AG04450 (cell line): ENCODE measurements at regions of chr14 and their contacts with region 1.

Region 1: GRCh38 chr14:72904840-72905561 is 11.1 kb upstream of the DPF3 start:
- DNase-seq: peak; percentile 49
- H3K4me3 ChIP-seq: no peak overlapping the region
- H3K27ac ChIP-seq: no peak overlapping the region
- H3K27me3 ChIP-seq: no peaks in the 10 kb centered on the region
- CTCF ChIP-seq: peak; percentile 96

Region 2: DNA sequence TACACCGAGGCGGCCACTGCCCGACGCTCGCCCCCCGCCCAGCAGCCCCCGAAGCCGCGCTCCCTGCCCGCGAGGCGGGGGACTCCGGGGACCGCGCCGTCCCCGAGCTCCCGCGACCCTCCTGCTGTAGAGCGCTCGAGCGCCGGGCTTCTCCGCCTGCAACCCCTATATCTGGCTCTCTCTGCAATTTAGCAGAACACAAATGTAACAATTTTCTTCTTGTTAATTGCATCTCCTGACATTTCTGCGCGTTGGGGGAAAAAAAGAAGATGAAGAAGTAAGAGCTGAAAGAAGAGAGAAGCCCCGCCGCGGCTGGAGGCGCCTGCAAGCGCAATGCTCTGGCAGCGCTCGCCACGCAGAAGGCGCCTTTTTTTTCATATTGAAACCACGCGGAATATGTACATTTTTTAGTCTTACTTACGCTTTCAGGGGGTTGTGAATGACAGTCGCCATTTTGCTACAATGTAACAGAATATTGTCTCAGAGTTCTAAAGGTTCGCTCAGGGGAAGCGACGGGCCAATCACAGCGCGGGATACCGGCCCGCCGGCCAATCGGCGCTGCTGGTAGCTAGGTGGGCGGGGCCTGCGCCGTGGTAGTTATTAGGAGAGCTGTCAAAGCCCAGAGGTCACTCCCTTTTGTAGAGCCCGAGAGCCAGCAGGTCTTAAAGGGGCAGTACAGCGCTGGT is 11.2 kb before region 1 on chr14 and contains the start of gene DPF3:
- CTCF ChIA-PET with region 1: interaction called, 15 read pairs
- POLR2A ChIA-PET with region 1: interaction called, 3 read pairs
- DNase-seq: peak; percentile 91
- H3K4me3 ChIP-seq: peak within 1 kb of the TSS; percentile 83
- H3K27ac ChIP-seq: peak within 1 kb of the TSS; percentile 39
- H3K27me3 ChIP-seq: no peaks in the 10 kb centered on the region
- CTCF ChIP-seq: no peak
- polyA plus RNA-seq, gene DPF3: 15.8 and 18.1 TPM in 2 replicates